ENCODE measurements at regions of chr5 and their contacts with region 1.

Region 1: DNA sequence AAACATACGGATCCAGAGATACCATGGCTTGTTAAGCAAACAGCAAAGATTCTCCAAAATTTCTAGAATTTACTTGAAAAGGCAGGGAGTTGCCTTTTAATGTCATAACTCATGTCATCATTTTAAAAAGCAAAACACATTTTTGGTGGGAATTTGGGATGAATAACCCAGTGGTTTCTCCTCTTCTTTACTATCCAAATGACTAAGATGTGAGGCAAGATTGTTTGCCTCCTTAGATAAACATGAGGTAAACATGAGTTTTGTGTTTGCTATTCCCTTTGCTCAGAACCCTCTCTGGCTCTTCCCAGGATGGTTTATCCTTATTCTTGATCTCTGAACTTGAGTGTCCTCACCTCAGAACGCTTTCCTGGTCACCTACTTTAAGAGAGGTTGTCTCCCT is 267.0 kb downstream of the EBF1 start:
- DNase-seq: no peak
- H3K4me3 ChIP-seq: no peak overlapping the region
- H3K27ac ChIP-seq: no peak overlapping the region
- H3K4me1 ChIP-seq: no peaks in the 10 kb centered on the region
- H3K27me3 ChIP-seq: 0 out of 2 replicates have a peak, but pooled peaks cover 4% of the 10 kb centered on the region
- CTCF ChIP-seq: no peak

Region 2: DNA sequence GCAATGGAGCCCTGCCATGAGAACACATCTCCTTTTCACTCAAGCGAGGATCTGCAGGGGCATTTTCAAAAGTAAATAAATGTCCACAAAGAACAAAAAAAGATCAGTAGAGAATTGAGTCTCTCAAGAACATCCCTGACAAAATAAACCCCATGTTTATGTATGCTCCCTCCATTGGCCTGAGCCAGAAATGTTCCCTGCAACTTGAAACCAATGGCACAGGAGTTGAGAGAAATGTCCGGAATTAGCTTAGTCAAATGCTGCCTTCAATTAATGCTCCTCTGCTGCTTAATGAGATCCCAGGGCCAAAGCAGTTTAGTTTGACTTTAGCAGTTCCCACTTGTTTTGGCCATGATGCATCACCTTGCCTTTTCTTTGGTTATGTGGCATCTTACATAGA is 28.6 kb after region 1 on chr5:
- CTCF ChIA-PET with region 1: no interaction called
- POLR2A ChIA-PET with region 1: no interaction called
- intact Hi-C with region 1: loop called (anchors 1 kb)
- DNase-seq: no peak
- H3K4me3 ChIP-seq: no peak overlapping the region
- H3K27ac ChIP-seq: no peak overlapping the region
- H3K4me1 ChIP-seq: no peaks in the 10 kb centered on the region
- H3K27me3 ChIP-seq: peaks cover 39% of the 10 kb centered on the region; the same call in 1 of the 2 replicates
- CTCF ChIP-seq: no peak